ENCODE measurements at regions of chr16 and their contacts with region 1.

Region 1: GRCh38 chr16:4517812-4518680 is 20.5 kb downstream of the CDIP1 start:
- DNase-seq: no peak
- ATAC-seq: peak; percentile 44
- H3K4me3 ChIP-seq: no peak overlapping the region
- H3K27ac ChIP-seq: no peak overlapping the region
- H3K4me1 ChIP-seq: peaks cover 23% of the 10 kb centered on the region
- H3K27me3 ChIP-seq: no peaks in the 10 kb centered on the region
- CTCF ChIP-seq: peak; percentile 54 to 73 (median 68); a peak in 5 of 6 replicates
- EP300 ChIP-seq: no peak
- POLR2A ChIP-seq: no peak
- RAD21 ChIP-seq: peak; percentile 82

Region 2: DNA sequence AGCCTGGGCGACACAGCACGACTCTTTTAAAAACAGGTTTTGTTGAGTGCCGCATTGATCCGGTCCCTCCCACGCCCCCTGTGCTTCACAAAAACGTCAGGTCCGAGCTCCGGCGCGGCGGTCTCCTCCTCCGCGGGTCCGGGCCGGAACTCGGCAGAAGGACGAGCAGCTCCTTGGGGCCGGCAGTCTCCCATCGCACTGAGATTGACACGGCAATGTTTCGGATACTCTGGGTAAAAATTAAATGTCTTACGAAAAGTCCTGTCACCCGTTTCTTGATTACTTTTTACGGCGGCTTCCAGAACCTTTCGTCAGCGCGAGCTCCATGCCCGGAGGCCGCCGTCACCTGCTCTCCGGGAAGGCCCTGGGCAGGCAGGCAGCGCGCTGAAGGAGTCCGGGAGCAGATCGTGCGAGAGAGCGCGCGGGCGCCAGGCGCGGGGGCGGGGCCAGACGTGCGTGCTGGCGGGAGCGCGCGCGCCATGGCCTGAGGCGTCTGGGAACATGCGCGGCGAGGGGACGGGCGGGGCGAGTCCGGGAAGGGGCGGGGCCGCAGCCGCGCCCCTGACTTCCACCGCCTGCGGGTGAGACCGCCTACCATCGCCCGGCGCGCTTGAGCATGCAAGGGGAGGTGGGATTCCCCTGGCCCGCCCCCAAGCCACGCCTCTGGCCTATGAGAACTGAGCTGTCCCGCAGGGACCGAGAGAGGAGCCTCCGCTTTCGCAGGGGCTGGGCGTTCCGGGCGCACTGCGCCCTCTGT is 264.5 kb before region 1 on chr16:
- CTCF ChIA-PET with region 1: no interaction called
- POLR2A ChIA-PET with region 1: no interaction called
- RAD21 ChIA-PET with region 1: no interaction called
- SMC1A ChIA-PET with region 1: no interaction called
- in situ Hi-C with region 1: no loop called
- intact Hi-C with region 1: no loop called
- DNase-seq: peak; percentile 88
- ATAC-seq: peak; percentile 98
- H3K4me3 ChIP-seq: peak overlapping the region; percentile 56
- H3K27ac ChIP-seq: peak overlapping the region; percentile 82
- H3K4me1 ChIP-seq: no peaks in the 10 kb centered on the region
- H3K27me3 ChIP-seq: no peaks in the 10 kb centered on the region
- CTCF ChIP-seq: no peak
- EP300 ChIP-seq: 0 out of 4 replicates have a peak, but pooled peaks of 1 of the 2 experiments have one; percentile 6
- POLR2A ChIP-seq: peak; percentile 95
- RAD21 ChIP-seq: peak; percentile 80

Region 3: DNA sequence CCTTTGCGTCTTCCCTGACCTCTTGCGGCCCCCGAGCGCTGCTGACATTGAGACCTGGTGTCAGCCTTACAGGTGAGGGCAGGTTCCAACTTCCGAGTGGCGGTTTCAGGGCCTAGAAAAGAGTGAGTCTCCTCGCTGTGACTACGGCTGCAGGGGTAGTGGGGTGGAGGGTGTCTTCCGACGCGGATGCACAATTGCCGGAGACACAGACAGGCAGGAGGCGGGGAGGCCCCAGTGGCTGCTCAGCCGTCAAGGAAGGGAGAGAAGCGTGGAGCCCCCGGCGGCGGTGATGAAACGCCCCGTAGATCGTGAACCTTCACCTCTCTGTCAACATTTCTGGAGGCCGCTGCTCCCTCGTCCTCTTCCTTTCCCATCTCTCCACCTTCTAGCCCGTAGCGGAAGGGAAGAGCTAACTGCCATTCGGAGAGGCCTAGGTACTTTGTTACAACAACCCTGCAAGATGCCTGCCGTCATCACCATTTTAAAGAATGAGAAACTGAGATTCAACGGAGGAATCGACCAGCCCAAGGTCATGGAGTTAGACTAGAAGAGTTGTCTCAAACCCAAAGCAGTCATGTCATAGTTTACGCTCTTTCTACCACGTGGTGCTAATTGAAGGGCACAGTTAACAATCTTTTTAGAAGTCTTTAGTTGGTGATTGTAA is 91.9 kb before region 1 on chr16:
- CTCF ChIA-PET with region 1: no interaction called
- POLR2A ChIA-PET with region 1: no interaction called
- RAD21 ChIA-PET with region 1: no interaction called
- SMC1A ChIA-PET with region 1: no interaction called
- in situ Hi-C with region 1: no loop called
- intact Hi-C with region 1: no loop called
- DNase-seq: no peak
- ATAC-seq: peak; percentile 61
- H3K4me3 ChIP-seq: peak overlapping the region; percentile 92
- H3K27ac ChIP-seq: peak overlapping the region; percentile 100
- H3K4me1 ChIP-seq: no peaks in the 10 kb centered on the region
- H3K27me3 ChIP-seq: no peaks in the 10 kb centered on the region
- CTCF ChIP-seq: no peak
- EP300 ChIP-seq: no peak
- POLR2A ChIP-seq: no peak
- RAD21 ChIP-seq: no peak

Region 4: GRCh38 chr16:4544473-4544872 is 26.4 kb after region 1 on chr16:
- CTCF ChIA-PET with region 1: interaction called, 65 read pairs
- POLR2A ChIA-PET with region 1: no interaction called
- RAD21 ChIA-PET with region 1: interaction called, 6 read pairs
- SMC1A ChIA-PET with region 1: interaction called, 11 read pairs
- in situ Hi-C with region 1: no loop called
- intact Hi-C with region 1: no loop called
- DNase-seq: no peak
- ATAC-seq: no peak
- H3K4me3 ChIP-seq: no peak overlapping the region
- H3K27ac ChIP-seq: no peak overlapping the region
- H3K4me1 ChIP-seq: no peaks in the 10 kb centered on the region
- H3K27me3 ChIP-seq: no peaks in the 10 kb centered on the region
- CTCF ChIP-seq: no peak
- EP300 ChIP-seq: no peak
- POLR2A ChIP-seq: no peak
- RAD21 ChIP-seq: no peak

Region 5: GRCh38 chr16:4550591-4550990 is 32.5 kb after region 1 on chr16:
- CTCF ChIA-PET with region 1: interaction called, 65 read pairs
- POLR2A ChIA-PET with region 1: no interaction called
- RAD21 ChIA-PET with region 1: interaction called, 6 read pairs
- SMC1A ChIA-PET with region 1: interaction called, 11 read pairs
- in situ Hi-C with region 1: no loop called
- intact Hi-C with region 1: no loop called
- DNase-seq: no peak
- ATAC-seq: no peak
- H3K4me3 ChIP-seq: no peak overlapping the region
- H3K27ac ChIP-seq: no peak overlapping the region
- H3K4me1 ChIP-seq: no peaks in the 10 kb centered on the region
- H3K27me3 ChIP-seq: peaks cover 0 to 2% of the 10 kb centered on the region in 2 experiments; a peak in 1 of 4 replicates
- CTCF ChIP-seq: no peak
- EP300 ChIP-seq: no peak
- POLR2A ChIP-seq: no peak
- RAD21 ChIP-seq: no peak

Region 6: GRCh38 chr16:4561596-4561995 is 43.5 kb after region 1 on chr16:
- CTCF ChIA-PET with region 1: no interaction called
- POLR2A ChIA-PET with region 1: no interaction called
- RAD21 ChIA-PET with region 1: no interaction called
- SMC1A ChIA-PET with region 1: no interaction called
- in situ Hi-C with region 1: no loop called
- intact Hi-C with region 1: no loop called
- DNase-seq: no peak
- ATAC-seq: no peak
- H3K4me3 ChIP-seq: no peak overlapping the region
- H3K27ac ChIP-seq: no peak overlapping the region
- H3K4me1 ChIP-seq: peaks cover 4% of the 10 kb centered on the region; the same call in 1 of the 2 replicates
- H3K27me3 ChIP-seq: peaks cover 0 to 4% of the 10 kb centered on the region in 2 experiments; a peak in 2 of 4 replicates
- CTCF ChIP-seq: no peak
- EP300 ChIP-seq: no peak
- POLR2A ChIP-seq: no peak
- RAD21 ChIP-seq: no peak

Region 7: DNA sequence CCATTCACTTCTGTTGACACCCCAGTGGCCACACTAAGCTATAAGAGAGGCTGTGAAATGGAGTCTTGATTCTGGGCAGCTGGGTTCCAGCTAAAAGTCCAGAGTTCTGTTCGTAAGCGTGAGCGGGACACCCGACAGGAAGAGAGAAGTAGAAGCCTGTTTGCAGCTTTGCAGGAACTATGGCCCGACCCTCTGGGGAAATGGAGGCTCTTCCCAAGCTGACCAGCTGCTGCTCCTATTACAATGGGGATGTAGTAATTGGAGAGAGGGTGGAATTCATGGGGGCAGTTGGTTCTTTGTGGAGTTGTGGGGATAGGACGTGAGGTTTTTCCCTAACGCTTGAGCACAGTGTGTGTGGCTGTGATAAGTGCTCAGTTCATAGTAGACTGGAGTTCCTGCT is 68.2 kb after region 1 on chr16:
- CTCF ChIA-PET with region 1: interaction called, 18 read pairs
- POLR2A ChIA-PET with region 1: no interaction called
- RAD21 ChIA-PET with region 1: interaction called, 3 read pairs
- SMC1A ChIA-PET with region 1: interaction called, 6 read pairs
- in situ Hi-C with region 1: no loop called
- intact Hi-C with region 1: no loop called
- DNase-seq: no peak
- ATAC-seq: no peak
- H3K4me3 ChIP-seq: no peak overlapping the region
- H3K27ac ChIP-seq: no peak overlapping the region
- H3K4me1 ChIP-seq: no peaks in the 10 kb centered on the region
- H3K27me3 ChIP-seq: no peaks in the 10 kb centered on the region; a peak in 1 of 4 replicates
- CTCF ChIP-seq: no peak
- EP300 ChIP-seq: no peak
- POLR2A ChIP-seq: no peak
- RAD21 ChIP-seq: no peak

Region 8: DNA sequence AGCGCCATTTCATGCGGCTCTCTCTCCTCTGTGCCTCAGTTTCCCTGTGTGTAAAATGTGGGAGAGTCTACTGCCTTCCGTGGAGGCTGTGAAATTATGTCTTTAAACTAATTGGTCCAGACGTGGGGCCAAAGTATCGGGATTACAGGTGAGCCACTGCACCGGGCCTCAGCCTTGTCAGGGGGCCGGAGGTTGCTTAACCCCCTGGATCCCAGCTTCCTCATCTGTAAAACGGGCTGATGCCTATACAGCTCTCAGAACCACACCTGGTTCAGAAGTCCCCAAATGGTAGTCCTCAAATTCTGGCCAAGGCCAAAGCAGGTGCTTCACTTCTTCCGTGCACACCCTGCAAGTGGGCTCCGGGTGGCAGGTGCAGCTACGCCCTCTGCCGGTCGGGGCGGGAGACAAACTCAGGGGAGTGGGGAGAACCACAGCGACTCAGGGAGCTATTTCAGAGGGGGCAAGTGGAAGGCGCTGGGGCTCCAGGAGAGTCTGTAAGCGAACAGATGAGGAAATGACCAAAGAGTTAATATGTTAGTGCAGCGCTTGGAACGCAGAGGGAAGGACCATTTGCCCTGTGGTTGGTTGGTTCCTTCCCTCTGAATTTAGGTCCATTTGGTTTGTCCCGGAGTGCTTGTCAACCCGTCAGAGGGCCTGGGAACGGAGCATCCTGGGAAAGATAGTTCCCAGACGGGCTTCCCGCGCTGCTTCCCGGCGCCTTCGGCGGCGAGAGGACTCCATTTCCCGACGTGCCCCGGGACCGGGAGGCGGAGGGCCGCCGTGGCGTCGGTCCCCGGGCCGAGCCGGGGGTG is 106.2 kb after region 1 on chr16 and contains the start of gene MGRN1:
- CTCF ChIA-PET with region 1: interaction called, 10 read pairs
- POLR2A ChIA-PET with region 1: no interaction called
- RAD21 ChIA-PET with region 1: no interaction called
- SMC1A ChIA-PET with region 1: interaction called, 5 read pairs
- in situ Hi-C with region 1: no loop called
- intact Hi-C with region 1: loop called (anchors 10 kb)
- DNase-seq: peak; percentile 96
- ATAC-seq: peak; percentile 88
- H3K4me3 ChIP-seq: peak within 1 kb of the TSS; percentile 86
- H3K27ac ChIP-seq: peak within 1 kb of the TSS; percentile 97
- H3K4me1 ChIP-seq: peaks cover 16% of the 10 kb centered on the region
- H3K27me3 ChIP-seq: no peaks in the 10 kb centered on the region
- CTCF ChIP-seq: peak; percentile 95 to 99 (median 99); a peak in 5 of 6 replicates
- EP300 ChIP-seq: no peak
- POLR2A ChIP-seq: no peak
- RAD21 ChIP-seq: peak; percentile 66
- polyA plus RNA-seq, gene MGRN1: 0.35 to 0.77 TPM